Sigmoid colon (tissue), 7 donors: ENCODE measurements at regions of chr14 and their contacts with region 1.

Region 1: GRCh38 chr14:77320238-77320935 is at the start of gene POMT2:
- DNase-seq: peak; percentile 97
- H3K4me3 ChIP-seq: peak within 1 kb of the TSS; percentile 87 to 99 (median 96)
- H3K27ac ChIP-seq: peak within 1 kb of the TSS; percentile 94 to 99 (median 96)
- H3K4me1 ChIP-seq: peaks cover 0 to 32% (median 28%) of the 10 kb centered on the region in 4 donors
- H3K27me3 ChIP-seq: no peaks in the 10 kb centered on the region
- CTCF ChIP-seq: peak in 3 of 4 experiments; percentile 13 to 52 (median 51)
- EP300 ChIP-seq: no peak
- POLR2A ChIP-seq: peak; percentile 32 to 41
- total RNA-seq, gene POMT2: 10.5 to 21.0 (median 16.4) TPM

Region 2: DNA sequence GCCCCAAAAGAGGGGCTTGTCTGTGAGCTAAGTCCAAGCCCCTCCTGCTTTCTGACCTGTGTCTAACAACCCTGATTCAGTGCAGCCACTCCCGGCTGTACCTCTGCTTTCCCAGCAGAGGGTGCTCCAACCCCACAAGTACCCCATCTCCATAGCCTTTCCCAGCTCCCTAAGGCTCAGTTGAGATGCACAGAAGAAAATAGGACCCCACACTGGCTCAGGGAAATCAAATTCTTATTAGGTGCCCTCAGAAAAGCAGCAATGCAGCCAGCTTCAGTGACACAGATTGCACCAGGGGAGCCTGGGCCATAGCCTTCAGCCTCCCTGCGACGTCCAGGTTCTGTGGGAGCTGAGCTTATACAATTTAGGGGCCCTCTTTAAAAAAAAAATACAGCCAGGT is 444.3 kb before region 1 on chr14:
- intact Hi-C with region 1: loop called (anchors 5 kb)
- DNase-seq: peak; percentile 82
- H3K4me3 ChIP-seq: no peak overlapping the region
- H3K27ac ChIP-seq: no peak overlapping the region
- H3K4me1 ChIP-seq: no peaks in the 10 kb centered on the region
- H3K27me3 ChIP-seq: no peaks in the 10 kb centered on the region
- CTCF ChIP-seq: peak; percentile 90 to 95 (median 92)
- EP300 ChIP-seq: no peak
- POLR2A ChIP-seq: no peak

Region 3: GRCh38 chr14:76985540-76986230 is 334.7 kb before region 1 on chr14:
- intact Hi-C with region 1: no loop called
- DNase-seq: no peak
- H3K4me3 ChIP-seq: no peak overlapping the region
- H3K27ac ChIP-seq: no peak overlapping the region
- H3K4me1 ChIP-seq: no peaks in the 10 kb centered on the region
- H3K27me3 ChIP-seq: no peaks in the 10 kb centered on the region
- CTCF ChIP-seq: no peak
- EP300 ChIP-seq: no peak
- POLR2A ChIP-seq: no peak

Region 4: DNA sequence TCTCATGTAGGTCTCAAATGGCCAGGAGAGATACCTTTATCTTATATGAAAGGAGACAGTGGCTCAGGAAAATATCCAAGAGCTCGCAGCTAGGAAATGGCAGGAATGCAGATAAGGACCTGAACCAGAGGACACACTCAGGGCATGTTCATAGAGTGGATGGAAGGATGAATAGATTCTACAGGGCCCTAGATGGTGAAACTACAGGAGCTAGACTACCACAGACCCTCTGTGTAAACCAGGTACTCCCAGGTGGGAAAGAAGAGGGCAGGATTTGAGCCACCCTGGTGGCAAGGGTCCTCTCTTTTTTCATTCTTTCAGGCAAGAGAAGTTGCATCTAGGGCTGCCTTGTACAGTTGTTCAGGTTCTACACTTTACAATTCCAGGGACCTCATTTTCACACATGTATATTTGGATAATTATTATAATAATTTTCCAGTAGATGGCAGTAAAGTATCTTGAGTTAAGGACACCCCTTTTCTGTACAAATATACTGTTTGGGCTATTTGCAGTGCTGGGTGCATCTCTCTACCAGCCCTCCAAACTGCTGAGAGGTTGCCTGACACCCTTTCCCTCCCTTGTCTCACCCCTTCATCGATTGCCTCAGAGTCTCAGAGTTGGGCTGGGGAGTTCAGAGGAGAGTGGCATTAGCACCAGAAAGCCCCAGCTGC is 168.3 kb before region 1 on chr14:
- intact Hi-C with region 1: loop called (anchors 5 kb)
- DNase-seq: no peak
- H3K4me3 ChIP-seq: no peak overlapping the region
- H3K27ac ChIP-seq: no peak overlapping the region
- H3K4me1 ChIP-seq: no peaks in the 10 kb centered on the region
- H3K27me3 ChIP-seq: peaks cover 0 to 20% (median 0%) of the 10 kb centered on the region in 3 donors
- CTCF ChIP-seq: peak in 1 of 4 experiments; percentile 5
- EP300 ChIP-seq: no peak
- POLR2A ChIP-seq: no peak

Region 5: DNA sequence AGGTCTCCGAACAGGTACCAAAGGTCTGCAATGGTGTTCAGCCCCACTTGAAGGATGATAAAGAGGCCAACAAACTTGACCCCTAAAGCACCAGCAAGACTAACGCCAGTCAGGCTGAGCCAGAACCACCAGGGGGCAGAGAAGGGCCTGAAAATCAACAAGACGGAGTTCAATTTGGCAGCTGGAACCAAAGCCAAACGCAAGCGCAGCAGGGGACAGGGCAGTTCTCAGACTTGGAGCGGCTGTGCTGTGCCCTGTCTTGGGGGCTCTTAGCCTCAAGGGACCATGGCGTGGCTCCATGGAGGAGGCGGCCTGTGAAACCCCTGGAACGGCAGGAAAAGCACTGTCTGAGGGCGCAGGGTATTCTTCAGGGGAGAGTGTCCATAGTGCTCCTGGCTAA is 19.3 kb before region 1 on chr14:
- intact Hi-C with region 1: loop called (anchors 2 kb)
- DNase-seq: peak; percentile 83
- H3K4me3 ChIP-seq: no peak overlapping the region
- H3K27ac ChIP-seq: no peak overlapping the region
- H3K4me1 ChIP-seq: peaks cover 0 to 24% (median 3%) of the 10 kb centered on the region in 4 donors
- H3K27me3 ChIP-seq: no peaks in the 10 kb centered on the region
- CTCF ChIP-seq: peak; percentile 40 to 72 (median 61)
- EP300 ChIP-seq: no peak
- POLR2A ChIP-seq: no peak

Region 6: DNA sequence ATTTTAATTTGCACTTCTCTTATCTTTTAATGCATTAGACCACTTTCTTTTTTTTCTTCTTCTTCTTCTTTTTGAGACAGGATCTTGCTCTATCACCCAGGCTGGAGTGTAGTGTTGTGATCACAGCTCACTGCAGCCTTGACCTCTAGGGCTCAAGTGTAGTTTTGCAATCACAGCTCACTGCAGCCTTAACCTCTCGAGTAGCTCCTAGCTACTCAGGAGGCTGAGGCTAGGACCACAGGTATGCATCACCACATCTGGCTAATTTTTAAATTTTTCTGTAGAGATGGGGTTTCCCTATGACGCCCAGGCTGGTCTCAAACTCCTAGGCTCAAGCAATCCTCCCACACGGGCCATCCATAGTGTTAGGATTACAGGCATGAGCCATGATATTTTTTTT is 43.8 kb after region 1 on chr14:
- intact Hi-C with region 1: no loop called
- DNase-seq: no peak
- H3K4me3 ChIP-seq: no peak overlapping the region
- H3K27ac ChIP-seq: no peak overlapping the region
- H3K4me1 ChIP-seq: no peaks in the 10 kb centered on the region
- H3K27me3 ChIP-seq: no peaks in the 10 kb centered on the region
- CTCF ChIP-seq: no peak
- EP300 ChIP-seq: no peak
- POLR2A ChIP-seq: no peak

Region 7: DNA sequence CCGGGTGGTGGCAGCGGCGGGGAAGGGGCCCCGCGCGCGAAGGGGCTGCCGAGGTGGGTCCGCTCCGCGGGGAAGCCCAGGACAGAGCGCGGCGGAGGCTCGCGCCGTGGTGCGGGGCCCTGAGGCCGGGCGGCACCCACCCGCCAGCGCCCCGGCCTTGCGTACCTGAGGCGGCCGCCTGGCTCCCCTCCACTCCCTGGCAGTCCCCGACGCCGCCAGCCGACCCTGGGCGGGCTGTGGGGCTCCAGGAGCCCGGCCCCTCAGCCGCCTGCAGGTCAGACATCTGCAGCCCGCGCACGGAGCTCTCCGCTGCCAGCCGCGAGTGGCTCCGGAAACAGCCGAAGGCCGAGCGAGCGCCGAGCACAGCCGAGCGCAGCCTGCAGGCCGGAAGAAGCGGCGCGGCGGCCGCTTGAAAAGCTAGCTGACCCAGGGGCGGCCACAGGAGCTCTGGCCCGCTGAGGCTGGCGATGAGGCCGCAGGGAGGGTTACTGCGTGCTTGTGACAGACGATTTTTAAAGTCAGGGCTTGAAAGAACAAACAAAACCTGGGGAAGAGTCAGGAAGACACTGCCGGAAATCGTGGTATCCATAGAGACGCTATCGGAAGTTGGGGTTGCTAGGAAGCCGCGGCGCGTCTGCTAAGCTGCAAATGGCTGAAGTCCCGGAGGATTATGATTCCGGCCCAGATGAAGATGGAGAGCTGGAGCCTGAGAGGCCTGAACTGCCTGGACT is 56.5 kb after region 1 on chr14 and contains the starts of genes SAMD15 and TMED8:
- intact Hi-C with region 1: loop called (anchors 2 kb)
- DNase-seq: peak; percentile 85
- H3K4me3 ChIP-seq: peak within 1 kb of the TSS; percentile 67 to 94 (median 80)
- H3K27ac ChIP-seq: peak within 1 kb of the TSS; percentile 75 to 89 (median 84)
- H3K4me1 ChIP-seq: peaks cover 0 to 25% (median 17%) of the 10 kb centered on the region in 4 donors
- H3K27me3 ChIP-seq: no peaks in the 10 kb centered on the region
- CTCF ChIP-seq: peak in 3 of 4 experiments; percentile 15 to 32 (median 22)
- EP300 ChIP-seq: peak in 1 of 4 donors; percentile 9
- POLR2A ChIP-seq: no peak
- total RNA-seq, gene SAMD15: 0.16 to 0.55 (median 0.31) TPM
- total RNA-seq, gene TMED8: 13.6 to 15.3 (median 14.7) TPM